ENCODE measurements at regions of chr13 and their contacts with region 1.

Region 1: GRCh38 chr13:30465585-30466357 is at the start of gene HMGB1:
- DNase-seq: peak; percentile 94 to 97
- H3K4me3 ChIP-seq: peak within 1 kb of the TSS; percentile 65 to 96 (median 85)
- H3K27ac ChIP-seq: peak within 1 kb of the TSS; percentile 98
- H3K4me1 ChIP-seq: peaks cover 0 to 3% (median 3%) of the 10 kb centered on the region in 4 experiments; a peak in 4 of 7 replicates
- H3K27me3 ChIP-seq: no peaks in the 10 kb centered on the region
- CTCF ChIP-seq: no peak
- EP300 ChIP-seq: no peak
- POLR2A ChIP-seq: peak; percentile 95 to 97
- RAD21 ChIP-seq: no peak
- total RNA-seq, gene HMGB1: 757 and 776 TPM in 2 replicates

Region 2: DNA sequence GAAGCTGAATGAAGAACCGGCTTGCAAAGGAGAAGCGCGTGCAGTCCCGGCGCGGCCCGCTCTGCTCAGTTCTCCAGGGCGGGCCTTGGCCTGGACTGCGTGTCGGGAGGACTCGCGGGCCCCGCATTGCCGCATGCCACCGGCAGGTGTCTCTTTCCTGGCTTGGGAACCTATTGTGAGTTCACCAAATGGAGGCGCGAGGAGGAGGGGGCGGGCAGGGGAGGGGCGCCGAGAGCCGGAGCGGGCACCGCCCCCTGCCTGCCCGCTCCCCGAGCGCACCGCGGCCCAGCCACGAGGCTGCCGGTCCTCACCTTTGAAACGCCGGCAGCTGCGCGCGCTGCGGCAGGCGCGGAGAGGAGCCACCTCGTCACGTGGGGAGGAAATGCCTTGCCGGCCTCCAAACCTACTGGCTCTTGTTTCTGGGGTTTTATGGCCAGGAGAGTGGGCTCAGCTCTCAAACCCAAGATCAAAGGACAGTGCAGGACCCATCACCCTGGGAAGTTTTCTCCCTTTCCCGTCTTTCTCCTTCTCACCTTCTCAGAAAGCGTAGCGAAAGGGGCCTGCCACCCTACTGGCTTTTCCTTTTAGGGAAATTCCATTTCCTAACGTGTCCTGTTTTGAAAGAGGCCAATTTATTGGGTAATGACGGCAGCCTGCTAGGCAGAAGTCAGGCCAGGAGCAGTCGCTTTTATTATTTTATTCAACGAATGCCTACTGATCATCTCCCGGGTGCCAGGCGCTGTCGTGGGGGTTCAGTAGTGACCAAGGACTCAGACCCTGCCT is 57.3 kb before region 1 on chr13:
- CTCF ChIA-PET with region 1: interaction called, 5 read pairs
- POLR2A ChIA-PET with region 1: interaction called, 10 read pairs
- DNase-seq: peak; percentile 92 to 97
- H3K4me3 ChIP-seq: peak overlapping the region; percentile 3 to 54 (median 13); a peak in 5 of 8 replicates
- H3K27ac ChIP-seq: peak overlapping the region; percentile 20; the same call in 1 of the 2 replicates
- H3K4me1 ChIP-seq: peaks cover 3 to 7% (median 6%) of the 10 kb centered on the region in 4 experiments
- H3K27me3 ChIP-seq: peaks cover 0 to 12% (median 8%) of the 10 kb centered on the region in 4 experiments; a peak in 6 of 7 replicates
- CTCF ChIP-seq: peak; percentile 68 to 77 (median 69)
- EP300 ChIP-seq: no peak
- POLR2A ChIP-seq: peak in 1 of 2 experiments; percentile 56; a peak in 2 of 3 replicates
- RAD21 ChIP-seq: peak; percentile 48 to 65

Region 3: GRCh38 chr13:30421093-30422053 is 44.4 kb before region 1 on chr13:
- CTCF ChIA-PET with region 1: no interaction called
- POLR2A ChIA-PET with region 1: interaction called, 10 read pairs
- DNase-seq: peak in 1 of 2 experiments; percentile 78
- H3K4me3 ChIP-seq: peak overlapping the region; percentile 73 to 83 (median 76)
- H3K27ac ChIP-seq: no peak overlapping the region; the same call in 1 of the 2 replicates
- H3K4me1 ChIP-seq: peaks cover 0 to 9% (median 5%) of the 10 kb centered on the region in 4 experiments; a peak in 6 of 7 replicates
- H3K27me3 ChIP-seq: peaks cover 0 to 5% (median 0%) of the 10 kb centered on the region in 4 experiments; a peak in 4 of 7 replicates
- CTCF ChIP-seq: no peak
- EP300 ChIP-seq: no peak
- POLR2A ChIP-seq: no peak
- RAD21 ChIP-seq: no peak

Region 4: GRCh38 chr13:30446126-30446500 is 19.7 kb before region 1 on chr13:
- CTCF ChIA-PET with region 1: no interaction called
- POLR2A ChIA-PET with region 1: interaction called, 15 read pairs
- DNase-seq: no peak
- H3K4me3 ChIP-seq: peak overlapping the region; percentile 30 to 59 (median 40); a peak in 7 of 8 replicates
- H3K27ac ChIP-seq: peak overlapping the region; percentile 72
- H3K4me1 ChIP-seq: peaks cover 0 to 10% (median 7%) of the 10 kb centered on the region in 4 experiments; a peak in 6 of 7 replicates
- H3K27me3 ChIP-seq: no peaks in the 10 kb centered on the region; a peak in 1 of 7 replicates
- CTCF ChIP-seq: no peak
- EP300 ChIP-seq: no peak
- POLR2A ChIP-seq: peak in 1 of 2 experiments; percentile 35; a peak in 1 of 3 replicates
- RAD21 ChIP-seq: no peak

Region 5: DNA sequence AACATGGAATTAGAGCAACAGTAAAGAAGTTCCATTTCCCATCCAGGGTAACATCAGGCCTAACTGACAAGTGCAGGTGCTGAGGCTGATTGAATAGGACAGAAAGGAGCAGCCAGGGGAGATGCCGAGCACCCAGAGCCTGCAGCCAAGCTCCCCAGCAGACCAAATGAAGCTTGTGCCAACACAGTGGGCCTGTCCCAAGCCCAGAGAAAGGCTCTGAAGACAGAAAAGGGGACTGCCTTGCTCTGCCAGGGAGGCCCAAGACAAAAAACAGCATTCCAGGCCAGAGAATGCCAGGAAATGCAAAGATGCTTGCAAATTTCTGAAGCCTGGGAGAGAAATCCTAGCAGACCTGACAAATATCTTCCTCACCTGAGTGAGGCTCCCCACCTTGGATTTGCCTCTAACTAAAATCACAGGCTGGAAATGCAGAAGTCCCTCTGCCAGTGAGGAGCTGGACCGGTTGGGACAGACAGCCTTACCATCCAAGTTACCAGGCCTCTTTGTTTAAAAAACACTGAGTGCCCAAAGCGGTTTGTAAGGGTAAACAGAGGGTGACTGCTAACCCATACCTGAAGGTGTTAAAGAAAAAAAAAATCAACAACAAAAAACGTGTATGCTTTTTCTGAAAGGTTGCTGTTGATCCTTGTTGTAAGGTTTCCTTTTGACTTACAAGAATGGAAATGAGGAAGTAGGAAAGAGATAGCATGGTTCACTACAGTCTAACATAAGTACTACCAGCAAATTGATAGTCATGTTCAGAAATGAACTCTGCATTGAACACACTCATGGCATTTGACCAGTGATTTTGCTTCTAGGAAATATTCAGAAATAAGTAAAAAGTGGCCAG is 11.8 kb after region 1 on chr13:
- CTCF ChIA-PET with region 1: no interaction called
- POLR2A ChIA-PET with region 1: interaction called, 53 read pairs
- DNase-seq: peak in 1 of 2 experiments; percentile 53
- H3K4me3 ChIP-seq: no peak overlapping the region
- H3K27ac ChIP-seq: peak overlapping the region; percentile 13; the same call in 1 of the 2 replicates
- H3K4me1 ChIP-seq: peaks cover 0 to 11% (median 1%) of the 10 kb centered on the region in 4 experiments; a peak in 2 of 7 replicates
- H3K27me3 ChIP-seq: no peaks in the 10 kb centered on the region
- CTCF ChIP-seq: no peak
- EP300 ChIP-seq: no peak
- POLR2A ChIP-seq: no peak
- RAD21 ChIP-seq: no peak; a peak in 1 of 4 replicates

Region 6: DNA sequence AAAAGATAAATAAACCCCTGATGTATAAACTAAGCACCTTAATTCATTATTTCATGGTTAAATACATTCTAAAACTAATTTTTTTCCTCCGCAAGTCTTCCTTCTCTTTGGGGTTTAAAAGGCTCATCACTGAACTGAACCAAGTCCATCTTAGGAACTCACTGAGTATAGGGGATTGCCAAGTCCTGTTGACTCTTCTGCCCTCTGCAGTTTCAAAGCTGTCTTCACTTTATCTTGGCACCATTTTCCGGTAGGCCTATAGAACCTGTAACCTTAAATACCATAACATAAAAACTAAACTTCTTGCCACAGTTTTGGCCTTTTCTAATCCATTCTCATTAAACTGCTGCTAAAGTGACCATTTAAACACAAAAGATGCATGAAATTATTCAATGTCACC is 85.4 kb after region 1 on chr13:
- CTCF ChIA-PET with region 1: interaction called, 3 read pairs
- POLR2A ChIA-PET with region 1: interaction called, 12 read pairs
- DNase-seq: no peak
- H3K4me3 ChIP-seq: no peak overlapping the region
- H3K27ac ChIP-seq: no peak overlapping the region
- H3K4me1 ChIP-seq: no peaks in the 10 kb centered on the region
- H3K27me3 ChIP-seq: no peaks in the 10 kb centered on the region
- CTCF ChIP-seq: peak in 2 of 3 experiments; percentile 56 to 65; a peak in 3 of 4 replicates
- EP300 ChIP-seq: no peak
- POLR2A ChIP-seq: no peak
- RAD21 ChIP-seq: peak; percentile 82 to 86